ENCODE measurements at regions of chr21 and their contacts with region 1.

Region 1: GRCh38 chr21:23127973-23128372 is 2129.8 kb downstream of the NCAM2 start:
- DNase-seq: no peak
- H3K4me3 ChIP-seq: no peak overlapping the region
- H3K27ac ChIP-seq: no peak overlapping the region
- H3K4me1 ChIP-seq: no peaks in the 10 kb centered on the region
- H3K27me3 ChIP-seq: no peaks in the 10 kb centered on the region
- CTCF ChIP-seq: no peak
- POLR2A ChIP-seq: no peak

Region 2: GRCh38 chr21:23083242-23083641 is 44.7 kb before region 1 on chr21:
- intact Hi-C with region 1: no loop called
- DNase-seq: no peak
- H3K4me3 ChIP-seq: no peak overlapping the region
- H3K27ac ChIP-seq: no peak overlapping the region
- H3K4me1 ChIP-seq: no peaks in the 10 kb centered on the region
- H3K27me3 ChIP-seq: no peaks in the 10 kb centered on the region
- CTCF ChIP-seq: no peak
- POLR2A ChIP-seq: no peak

Region 3: DNA sequence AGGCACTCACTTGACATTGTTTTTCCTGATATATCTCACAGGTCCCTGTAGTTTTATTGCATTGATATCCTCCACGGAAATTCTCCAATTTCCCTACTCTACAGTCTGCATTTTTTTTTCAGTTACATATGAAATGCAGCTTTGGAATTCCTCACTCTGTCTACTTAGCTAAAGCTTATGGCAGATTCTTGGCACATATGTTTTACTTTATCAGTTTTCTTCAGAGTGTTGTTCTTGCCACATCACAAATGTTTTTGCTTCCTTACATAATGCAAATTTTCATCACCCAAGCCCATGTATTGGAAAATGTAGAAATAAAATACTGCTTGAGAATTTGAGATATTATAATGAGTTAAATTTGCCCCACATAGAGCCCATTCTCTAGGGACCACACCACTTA is 584.2 kb after region 1 on chr21:
- intact Hi-C with region 1: loop called (anchors 5 kb)
- DNase-seq: no peak
- H3K4me3 ChIP-seq: no peak overlapping the region
- H3K27ac ChIP-seq: no peak overlapping the region
- H3K4me1 ChIP-seq: no peaks in the 10 kb centered on the region
- H3K27me3 ChIP-seq: no peaks in the 10 kb centered on the region
- CTCF ChIP-seq: no peak
- POLR2A ChIP-seq: no peak